ENCODE measurements at regions of chr7 and their contacts with region 1.

Region 1: DNA sequence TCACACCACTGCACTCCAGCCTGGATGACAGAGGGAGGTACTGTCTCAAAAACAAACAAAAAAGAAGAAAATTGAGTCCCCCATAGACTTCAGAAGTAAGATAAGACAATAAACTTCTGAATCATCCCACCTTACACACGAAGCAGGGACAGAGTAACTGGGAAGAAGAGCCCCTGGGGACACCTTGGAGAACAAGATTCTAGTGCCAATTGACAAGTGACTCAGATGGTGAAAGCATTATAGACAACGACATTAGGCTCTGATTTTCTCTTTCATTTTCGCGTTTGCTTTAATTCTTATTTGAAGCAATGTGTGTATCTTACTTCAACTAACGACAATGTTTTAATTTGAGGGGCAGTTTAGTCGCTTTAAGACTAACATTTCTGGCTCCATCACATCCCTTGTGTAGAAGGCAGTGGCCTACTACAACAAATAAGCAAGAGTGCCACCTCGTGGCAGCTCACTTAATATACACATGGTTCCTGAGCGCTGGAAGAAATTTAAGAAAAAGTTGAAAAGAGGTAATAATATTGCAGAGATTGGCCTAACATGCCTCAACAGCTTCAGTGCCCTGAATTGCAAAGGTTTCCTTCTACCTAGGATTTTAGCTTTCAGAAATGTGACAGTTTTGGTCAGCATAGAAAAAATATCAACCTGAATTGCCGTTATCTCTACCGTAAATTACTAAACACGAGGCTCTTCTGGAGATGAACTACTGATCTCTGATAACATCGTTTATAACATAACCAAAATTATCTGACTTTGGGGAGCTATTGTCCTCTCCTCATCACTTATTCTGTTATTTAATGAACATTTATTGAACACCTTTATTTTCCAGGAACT is 36.7 kb downstream of the ASNS start:
- DNase-seq: peak; percentile 27 to 31
- ATAC-seq: peak in 2 of 8 donors; percentile 53 to 65
- H3K4me3 ChIP-seq: no peak overlapping the region
- H3K27ac ChIP-seq: no peak overlapping the region
- H3K4me1 ChIP-seq: peaks cover 0 to 4% (median 0%) of the 10 kb centered on the region in 9 donors
- H3K27me3 ChIP-seq: peaks cover 0 to 82% (median 24%) of the 10 kb centered on the region in 7 donors
- CTCF ChIP-seq: peak; percentile 22 to 77 (median 65)

Region 2: DNA sequence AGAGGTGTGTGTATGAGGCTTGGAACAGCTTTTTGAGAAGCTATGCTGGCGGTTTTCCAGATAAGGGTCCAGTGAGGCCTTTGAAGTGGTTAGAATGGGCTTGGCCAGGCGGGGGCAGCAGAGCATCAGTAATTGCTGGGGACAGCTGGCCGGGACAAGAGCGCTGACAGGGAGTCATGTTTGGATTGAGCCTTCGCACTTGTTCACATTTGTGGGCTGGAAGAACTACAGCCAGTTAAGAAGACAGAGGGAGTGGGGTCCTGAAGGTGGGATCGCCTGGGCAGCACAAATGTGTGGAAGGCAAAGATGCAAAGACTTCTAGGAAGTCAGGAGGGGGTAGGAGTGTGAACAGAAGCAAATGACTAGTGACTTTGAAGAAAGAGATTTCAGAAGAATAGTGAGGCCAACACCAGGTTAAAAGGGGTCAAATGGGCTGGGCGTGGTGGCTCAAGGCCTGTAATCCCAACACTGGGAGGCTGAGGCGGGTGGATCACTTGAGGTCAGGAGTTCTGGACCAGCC is 730.7 kb before region 1 on chr7:
- intact Hi-C with region 1: loop called (anchors 1 to 10 kb)
- DNase-seq: peak; percentile 87 to 88
- ATAC-seq: peak; percentile 87 to 98 (median 91)
- H3K4me3 ChIP-seq: no peak overlapping the region
- H3K27ac ChIP-seq: no peak overlapping the region
- H3K4me1 ChIP-seq: peaks cover 0 to 10% (median 0%) of the 10 kb centered on the region in 9 donors
- H3K27me3 ChIP-seq: peaks cover 0 to 5% (median 4%) of the 10 kb centered on the region in 7 donors
- CTCF ChIP-seq: peak; percentile 63 to 90 (median 80)

Region 3: GRCh38 chr7:97499204-97499603 is 336.3 kb before region 1 on chr7:
- intact Hi-C with region 1: loop called in 3 of 10 experiments (anchors 5 to 10 kb)
- DNase-seq: no peak
- ATAC-seq: no peak
- H3K4me3 ChIP-seq: no peak overlapping the region
- H3K27ac ChIP-seq: no peak overlapping the region
- H3K4me1 ChIP-seq: no peaks in the 10 kb centered on the region
- H3K27me3 ChIP-seq: no peaks in the 10 kb centered on the region
- CTCF ChIP-seq: peak in 7 of 9 donors; percentile 30 to 55 (median 38)

Region 4: DNA sequence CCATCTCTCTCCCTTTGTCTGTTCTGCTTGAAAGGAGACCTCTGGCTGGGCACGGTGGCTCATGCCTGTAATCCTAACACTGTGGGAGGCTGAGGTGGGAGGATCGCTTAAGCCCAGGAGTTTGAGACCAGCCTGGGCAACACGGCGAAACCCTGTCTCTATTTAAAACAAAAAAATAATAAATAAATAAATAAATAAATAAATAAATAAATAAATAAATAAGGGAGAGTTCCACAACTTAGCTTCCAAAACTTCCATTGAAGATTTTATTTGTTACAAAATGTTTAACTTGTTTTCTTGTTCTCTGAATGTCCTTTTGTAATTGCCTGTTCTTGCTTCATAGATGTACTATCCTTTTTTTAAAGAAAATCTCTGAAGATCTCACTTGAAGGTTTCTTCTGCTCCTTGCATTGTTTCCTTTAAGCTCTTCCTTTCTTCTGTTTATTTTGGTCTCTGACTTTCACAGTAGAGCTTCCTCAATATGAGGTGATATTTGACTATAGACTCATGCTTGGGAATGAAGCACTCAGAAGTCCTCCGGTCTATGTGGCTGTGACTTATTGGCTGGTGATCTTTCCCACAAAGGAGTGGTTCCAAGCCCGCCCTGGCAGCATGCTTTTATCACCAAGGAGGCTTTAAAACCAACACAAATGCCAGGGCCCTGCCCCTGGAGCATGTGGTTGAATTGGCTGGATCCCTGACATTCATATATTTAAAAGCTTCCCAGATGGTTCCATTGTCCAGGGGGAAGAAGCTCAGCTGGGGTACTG is 763.5 kb after region 1 on chr7:
- intact Hi-C with region 1: no loop called
- DNase-seq: no peak
- ATAC-seq: no peak
- H3K4me3 ChIP-seq: no peak overlapping the region
- H3K27ac ChIP-seq: no peak overlapping the region
- H3K4me1 ChIP-seq: no peaks in the 10 kb centered on the region
- H3K27me3 ChIP-seq: peaks cover 0 to 27% (median 15%) of the 10 kb centered on the region in 7 donors
- CTCF ChIP-seq: no peak

Measured in heart right ventricle (tissue), 16 donors.